CD8-positive, alpha-beta T cell (primary cell): ENCODE measurements at regions of chr18 and their contacts with region 1.

Region 1: GRCh38 chr18:24118750-24119577 is 19.9 kb upstream of the CABYR start:
- DNase-seq: peak; percentile 55 to 89 (median 79)
- ATAC-seq: peak; percentile 90
- H3K4me3 ChIP-seq: no peak overlapping the region
- H3K4me3 Mint-ChIP-seq: no peak overlapping the region
- H3K27ac ChIP-seq: no peak overlapping the region
- H3K27ac Mint-ChIP-seq: no peak overlapping the region
- H3K4me1 ChIP-seq: peaks cover 10% of the 10 kb centered on the region
- H3K4me1 Mint-ChIP-seq: peaks cover 23% of the 10 kb centered on the region
- H3K27me3 ChIP-seq: no peaks in the 10 kb centered on the region
- H3K27me3 Mint-ChIP-seq: no peaks in the 10 kb centered on the region
- CTCF ChIP-seq: peak; percentile 77

Region 2: DNA sequence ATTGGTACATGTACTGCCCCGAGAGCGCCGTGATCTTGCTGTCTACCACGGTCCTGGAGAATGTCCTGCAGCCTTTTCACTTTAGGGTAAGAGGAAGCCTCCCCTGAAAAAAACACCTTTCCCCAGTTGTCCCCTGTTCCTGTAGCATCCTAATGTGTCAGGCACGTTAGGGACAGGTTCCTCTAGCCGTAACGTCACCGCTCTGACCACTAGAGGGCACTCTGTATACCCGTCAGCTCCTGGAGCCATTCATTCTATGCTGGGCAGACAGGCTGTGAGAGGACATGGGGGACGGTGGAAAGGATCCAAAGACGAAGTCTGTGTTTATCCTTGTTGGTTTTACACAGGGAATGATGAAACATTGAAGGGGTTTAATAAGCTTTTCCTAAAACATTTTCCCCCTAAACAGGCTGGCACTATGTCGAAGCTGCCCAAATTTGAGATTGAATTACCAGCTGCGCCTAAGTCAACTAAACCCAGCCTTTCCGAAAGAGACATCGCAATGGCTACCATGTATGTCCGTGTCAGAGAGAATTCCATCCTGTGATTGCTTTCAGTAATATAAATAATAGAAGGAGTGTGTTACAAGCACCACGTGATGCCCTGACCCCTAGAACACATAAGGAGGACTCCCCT is 602.9 kb before region 1 on chr18:
- CTCF ChIA-PET with region 1: no interaction called
- POLR2A ChIA-PET with region 1: no interaction called
- intact Hi-C with region 1: loop called in 1 of 2 experiments (anchors 5 kb)
- DNase-seq: peak; percentile 49 to 87 (median 76)
- ATAC-seq: peak; percentile 99
- H3K4me3 ChIP-seq: no peak overlapping the region
- H3K4me3 Mint-ChIP-seq: no peak overlapping the region
- H3K27ac ChIP-seq: peak overlapping the region in 1 of 2 experiments; percentile 20
- H3K27ac Mint-ChIP-seq: peak overlapping the region; percentile 70
- H3K4me1 ChIP-seq: no peaks in the 10 kb centered on the region
- H3K4me1 Mint-ChIP-seq: peaks cover 15% of the 10 kb centered on the region
- H3K27me3 ChIP-seq: no peaks in the 10 kb centered on the region
- H3K27me3 Mint-ChIP-seq: no peaks in the 10 kb centered on the region
- CTCF ChIP-seq: peak; percentile 86

Region 3: DNA sequence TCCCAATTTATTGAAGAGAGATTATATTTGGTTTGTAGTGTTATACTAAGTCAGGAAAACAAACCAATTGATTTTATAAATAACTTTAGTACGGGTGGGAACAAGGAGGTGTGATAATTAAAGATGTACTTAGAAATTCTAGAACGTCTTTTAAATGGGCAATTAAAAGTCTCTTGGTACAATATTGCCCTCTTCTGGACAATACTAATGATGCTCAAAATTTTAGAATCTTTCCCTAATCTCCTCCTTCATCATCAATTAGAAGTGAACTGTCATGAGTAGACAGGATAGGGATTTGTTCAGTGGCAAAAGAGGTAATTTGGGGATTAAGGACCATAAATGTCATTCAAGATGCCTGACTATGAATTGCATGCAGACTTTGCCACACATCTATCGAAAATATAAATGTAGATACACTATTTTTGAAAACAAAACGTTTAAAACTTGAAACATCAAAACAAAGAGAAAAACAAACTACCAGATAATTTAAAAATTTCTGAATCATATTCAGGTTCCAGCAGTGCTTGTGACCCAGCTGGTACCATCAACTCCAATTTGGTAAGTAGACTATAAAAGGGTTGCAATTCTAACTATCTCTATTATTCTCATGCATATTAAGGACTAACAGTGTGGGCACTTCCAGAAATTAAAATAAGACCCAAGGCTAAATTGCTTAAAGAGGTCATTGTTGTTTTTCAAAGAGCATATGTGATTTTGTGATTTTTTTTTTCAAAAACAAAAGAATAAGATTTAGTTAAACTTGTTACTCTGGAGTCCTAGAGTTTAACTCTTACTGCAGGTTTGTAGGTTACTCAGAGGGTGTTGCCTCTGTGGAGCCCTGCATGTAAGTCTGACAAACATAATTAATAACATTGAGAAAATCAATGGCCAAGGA is 306.2 kb before region 1 on chr18:
- CTCF ChIA-PET with region 1: interaction called, 3 read pairs
- POLR2A ChIA-PET with region 1: no interaction called
- intact Hi-C with region 1: loop called in 1 of 2 experiments (anchors 5 kb)
- DNase-seq: peak in 2 of 9 experiments; percentile 45 to 59
- ATAC-seq: no peak
- H3K4me3 ChIP-seq: no peak overlapping the region
- H3K4me3 Mint-ChIP-seq: no peak overlapping the region
- H3K27ac ChIP-seq: no peak overlapping the region
- H3K27ac Mint-ChIP-seq: no peak overlapping the region
- H3K4me1 ChIP-seq: peaks cover 19% of the 10 kb centered on the region
- H3K4me1 Mint-ChIP-seq: peaks cover 30% of the 10 kb centered on the region
- H3K27me3 ChIP-seq: no peaks in the 10 kb centered on the region
- H3K27me3 Mint-ChIP-seq: no peaks in the 10 kb centered on the region
- CTCF ChIP-seq: peak; percentile 67

Region 4: GRCh38 chr18:23967321-23968089 is 151.5 kb before region 1 on chr18:
- CTCF ChIA-PET with region 1: interaction called, 8 read pairs
- POLR2A ChIA-PET with region 1: no interaction called
- intact Hi-C with region 1: loop called (anchors 1 kb)
- DNase-seq: peak in 7 of 9 experiments; percentile 16 to 73 (median 44)
- ATAC-seq: peak; percentile 7
- H3K4me3 ChIP-seq: no peak overlapping the region
- H3K4me3 Mint-ChIP-seq: peak overlapping the region; percentile 43
- H3K27ac ChIP-seq: peak overlapping the region in 1 of 2 experiments; percentile 6
- H3K27ac Mint-ChIP-seq: peak overlapping the region; percentile 73
- H3K4me1 ChIP-seq: peaks cover 69% of the 10 kb centered on the region
- H3K4me1 Mint-ChIP-seq: peaks cover 77% of the 10 kb centered on the region
- H3K27me3 ChIP-seq: no peaks in the 10 kb centered on the region
- H3K27me3 Mint-ChIP-seq: no peaks in the 10 kb centered on the region
- CTCF ChIP-seq: no peak

Region 5: GRCh38 chr18:24075731-24076130 is 43.2 kb before region 1 on chr18:
- CTCF ChIA-PET with region 1: interaction called, 4 read pairs
- POLR2A ChIA-PET with region 1: no interaction called
- intact Hi-C with region 1: loop called in 1 of 2 experiments (anchors 5 kb)
- DNase-seq: no peak
- ATAC-seq: no peak
- H3K4me3 ChIP-seq: no peak overlapping the region
- H3K4me3 Mint-ChIP-seq: no peak overlapping the region
- H3K27ac ChIP-seq: no peak overlapping the region
- H3K27ac Mint-ChIP-seq: peak overlapping the region; percentile 82
- H3K4me1 ChIP-seq: peaks cover 12% of the 10 kb centered on the region
- H3K4me1 Mint-ChIP-seq: peaks cover 58% of the 10 kb centered on the region
- H3K27me3 ChIP-seq: no peaks in the 10 kb centered on the region
- H3K27me3 Mint-ChIP-seq: no peaks in the 10 kb centered on the region
- CTCF ChIP-seq: no peak